T-cell (primary cell): ENCODE measurements at regions of chr10 and their contacts with region 1.

Region 1: DNA sequence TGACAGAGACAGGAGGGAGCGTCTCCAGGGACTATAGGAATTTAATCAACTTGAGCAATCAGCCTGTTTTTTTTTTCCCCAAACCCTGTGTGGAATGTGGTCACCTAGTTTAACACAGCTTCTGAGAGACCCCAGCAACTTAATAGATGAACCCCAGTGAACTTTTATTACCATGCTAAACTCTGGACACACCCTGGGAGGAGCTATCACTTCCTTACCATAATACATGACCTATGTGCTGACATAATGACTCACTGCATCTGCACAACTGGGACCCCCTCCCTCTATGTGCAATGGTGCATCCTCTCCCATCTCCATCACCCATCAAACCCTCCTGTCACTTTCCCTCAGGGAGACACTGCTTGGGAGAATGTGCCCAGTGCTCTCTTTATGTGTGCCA is 83.7 kb downstream of the EPC1 start:
- DNase-seq: no peak
- ATAC-seq: peak; percentile 33 to 40 (median 37)
- H3K4me3 ChIP-seq: no peak overlapping the region
- H3K4me3 Mint-ChIP-seq: no peak overlapping the region
- H3K27ac ChIP-seq: no peak overlapping the region
- H3K27ac Mint-ChIP-seq: no peak overlapping the region
- H3K4me1 ChIP-seq: no peaks in the 10 kb centered on the region
- H3K4me1 Mint-ChIP-seq: peaks cover 0 to 4% (median 3%) of the 10 kb centered on the region in 3 donors
- H3K27me3 ChIP-seq: no peaks in the 10 kb centered on the region
- H3K27me3 Mint-ChIP-seq: no peaks in the 10 kb centered on the region

Region 2: DNA sequence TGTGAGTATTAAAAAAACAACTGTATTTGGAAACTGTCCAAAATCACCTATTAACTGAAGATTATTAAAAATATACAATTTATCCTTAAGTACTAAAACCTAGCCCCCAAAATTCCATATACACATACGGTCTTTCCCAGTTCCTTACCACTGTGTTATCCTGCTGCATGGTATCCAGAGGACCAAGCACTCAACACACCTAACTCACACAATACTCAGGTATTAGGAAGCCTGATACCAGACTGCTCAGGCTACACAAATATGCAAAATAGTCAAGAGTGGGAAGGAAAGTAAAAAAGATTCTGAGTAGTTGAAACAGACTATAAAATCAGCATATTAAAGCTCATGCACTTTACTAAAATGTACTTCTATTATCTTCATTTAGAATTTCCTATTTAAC is 16.5 kb after region 1 on chr10:
- CTCF ChIA-PET with region 1: interaction called in 1 of 2 experiments, 12 read pairs
- POLR2A ChIA-PET with region 1: no interaction called
- DNase-seq: no peak
- ATAC-seq: no peak
- H3K4me3 ChIP-seq: no peak overlapping the region
- H3K4me3 Mint-ChIP-seq: no peak overlapping the region
- H3K27ac ChIP-seq: no peak overlapping the region
- H3K27ac Mint-ChIP-seq: peak overlapping the region in 1 of 2 donors; percentile 66
- H3K4me1 ChIP-seq: no peaks in the 10 kb centered on the region
- H3K4me1 Mint-ChIP-seq: peaks cover 0 to 28% (median 19%) of the 10 kb centered on the region in 3 donors
- H3K27me3 ChIP-seq: no peaks in the 10 kb centered on the region
- H3K27me3 Mint-ChIP-seq: no peaks in the 10 kb centered on the region

Region 3: GRCh38 chr10:33684211-33684611 is 1420.9 kb after region 1 on chr10:
- CTCF ChIA-PET with region 1: no interaction called
- POLR2A ChIA-PET with region 1: no interaction called
- DNase-seq: no peak
- ATAC-seq: no peak
- H3K4me3 ChIP-seq: no peak overlapping the region
- H3K4me3 Mint-ChIP-seq: no peak overlapping the region
- H3K27ac ChIP-seq: no peak overlapping the region
- H3K27ac Mint-ChIP-seq: no peak overlapping the region
- H3K4me1 ChIP-seq: no peaks in the 10 kb centered on the region
- H3K4me1 Mint-ChIP-seq: no peaks in the 10 kb centered on the region
- H3K27me3 ChIP-seq: no peaks in the 10 kb centered on the region
- H3K27me3 Mint-ChIP-seq: peaks cover 2 to 3% of the 10 kb centered on the region in 2 donors